ENCODE measurements at regions of chrX and their contacts with region 1.

Region 1: DNA sequence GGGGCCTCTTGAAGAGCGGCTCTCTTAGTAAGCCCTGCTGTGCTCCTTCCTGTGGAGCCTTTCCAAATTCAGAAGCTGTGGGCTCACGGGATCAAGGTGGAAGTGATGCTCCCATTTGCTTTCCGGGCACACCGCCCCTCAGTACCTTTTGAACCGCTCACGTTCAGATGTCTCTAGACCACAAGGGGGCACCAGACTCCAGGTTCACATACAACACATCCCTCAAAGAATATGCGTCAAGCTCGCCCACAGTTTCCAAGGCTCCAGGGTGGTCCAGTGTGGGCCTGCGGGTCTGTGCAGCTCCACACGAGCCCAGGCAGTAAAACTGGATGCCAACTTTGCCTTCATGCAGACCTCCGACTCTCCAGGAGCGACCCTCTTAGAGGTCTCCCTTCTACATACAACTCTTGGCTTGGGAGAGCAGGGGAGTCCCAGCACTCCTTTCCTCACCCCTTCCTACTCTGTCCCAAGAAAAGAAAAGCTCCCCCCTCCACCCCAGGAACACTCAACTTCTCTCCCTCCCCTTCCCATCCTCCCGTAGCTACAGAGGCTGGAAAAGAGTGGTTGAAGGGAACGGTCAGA is 11.0 kb downstream of the SUPT20HL1 start:
- DNase-seq: peak; percentile 75
- ATAC-seq: peak; percentile 64
- H3K4me3 Mint-ChIP-seq: peak overlapping the region; percentile 35
- H3K27ac Mint-ChIP-seq: peak overlapping the region; percentile 58
- H3K4me1 Mint-ChIP-seq: peaks cover 26% of the 10 kb centered on the region
- H3K27me3 Mint-ChIP-seq: no peaks in the 10 kb centered on the region

Region 2: GRCh38 chrX:23930894-23931689 is 440.4 kb before region 1 on chrX:
- CTCF ChIA-PET with region 1: no interaction called
- POLR2A ChIA-PET with region 1: no interaction called
- intact Hi-C with region 1: no loop called
- DNase-seq: no peak
- ATAC-seq: no peak
- H3K4me3 Mint-ChIP-seq: no peak overlapping the region
- H3K27ac Mint-ChIP-seq: peak overlapping the region; percentile 55
- H3K4me1 Mint-ChIP-seq: peaks cover 18% of the 10 kb centered on the region
- H3K27me3 Mint-ChIP-seq: no peaks in the 10 kb centered on the region

Region 3: GRCh38 chrX:24081661-24082264 is 289.7 kb before region 1 on chrX:
- CTCF ChIA-PET with region 1: no interaction called
- POLR2A ChIA-PET with region 1: no interaction called
- intact Hi-C with region 1: loop called in 1 of 2 experiments (anchors 2 kb)
- DNase-seq: peak; percentile 74
- ATAC-seq: peak; percentile 59
- H3K4me3 Mint-ChIP-seq: no peak overlapping the region
- H3K27ac Mint-ChIP-seq: no peak overlapping the region
- H3K4me1 Mint-ChIP-seq: peaks cover 27% of the 10 kb centered on the region
- H3K27me3 Mint-ChIP-seq: no peaks in the 10 kb centered on the region

Region 4: DNA sequence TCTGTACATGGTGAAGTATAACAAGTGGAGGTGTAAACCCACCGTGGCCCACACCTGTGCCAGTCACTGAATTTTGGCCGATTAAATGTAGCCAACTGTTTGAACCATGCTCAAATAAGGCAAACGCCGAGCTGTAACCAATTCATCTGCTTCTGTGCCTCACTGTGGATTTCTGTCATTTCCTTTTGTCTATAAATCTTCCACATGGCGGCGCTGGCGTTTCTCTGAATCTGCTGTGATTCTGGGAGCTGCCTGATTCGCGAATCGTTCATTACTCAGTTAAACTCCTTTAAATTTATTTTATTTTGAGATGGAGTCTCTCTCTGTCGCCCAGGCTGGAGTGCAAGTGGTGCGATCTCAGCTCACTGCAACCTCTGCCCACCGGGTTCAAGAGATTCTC is 76.9 kb before region 1 on chrX:
- CTCF ChIA-PET with region 1: interaction called, 6 read pairs
- POLR2A ChIA-PET with region 1: no interaction called
- intact Hi-C with region 1: loop called in 1 of 2 experiments (anchors 1 kb)
- DNase-seq: peak; percentile 73
- ATAC-seq: peak; percentile 47
- H3K4me3 Mint-ChIP-seq: no peak overlapping the region
- H3K27ac Mint-ChIP-seq: no peak overlapping the region
- H3K4me1 Mint-ChIP-seq: no peaks in the 10 kb centered on the region
- H3K27me3 Mint-ChIP-seq: no peaks in the 10 kb centered on the region

Region 5: GRCh38 chrX:24498975-24499374 is 127.5 kb after region 1 on chrX:
- CTCF ChIA-PET with region 1: interaction called, 30 read pairs
- POLR2A ChIA-PET with region 1: no interaction called
- intact Hi-C with region 1: no loop called
- DNase-seq: no peak
- ATAC-seq: peak; percentile 78
- H3K4me3 Mint-ChIP-seq: no peak overlapping the region
- H3K27ac Mint-ChIP-seq: peak overlapping the region; percentile 43
- H3K4me1 Mint-ChIP-seq: peaks cover 23% of the 10 kb centered on the region
- H3K27me3 Mint-ChIP-seq: no peaks in the 10 kb centered on the region

Region 6: GRCh38 chrX:24693453-24694202 is 322.1 kb after region 1 on chrX and contains the start of gene POLA1:
- CTCF ChIA-PET with region 1: no interaction called
- POLR2A ChIA-PET with region 1: interaction called, 6 read pairs
- intact Hi-C with region 1: loop called in 1 of 2 experiments (anchors 10 kb)
- DNase-seq: peak; percentile 89
- ATAC-seq: peak; percentile 93
- H3K4me3 Mint-ChIP-seq: peak within 1 kb of the TSS; percentile 85
- H3K27ac Mint-ChIP-seq: peak within 1 kb of the TSS; percentile 88
- H3K4me1 Mint-ChIP-seq: peaks cover 24% of the 10 kb centered on the region
- H3K27me3 Mint-ChIP-seq: no peaks in the 10 kb centered on the region
- total RNA-seq, gene POLA1: 48.4 to 52.1 TPM

Region 7: DNA sequence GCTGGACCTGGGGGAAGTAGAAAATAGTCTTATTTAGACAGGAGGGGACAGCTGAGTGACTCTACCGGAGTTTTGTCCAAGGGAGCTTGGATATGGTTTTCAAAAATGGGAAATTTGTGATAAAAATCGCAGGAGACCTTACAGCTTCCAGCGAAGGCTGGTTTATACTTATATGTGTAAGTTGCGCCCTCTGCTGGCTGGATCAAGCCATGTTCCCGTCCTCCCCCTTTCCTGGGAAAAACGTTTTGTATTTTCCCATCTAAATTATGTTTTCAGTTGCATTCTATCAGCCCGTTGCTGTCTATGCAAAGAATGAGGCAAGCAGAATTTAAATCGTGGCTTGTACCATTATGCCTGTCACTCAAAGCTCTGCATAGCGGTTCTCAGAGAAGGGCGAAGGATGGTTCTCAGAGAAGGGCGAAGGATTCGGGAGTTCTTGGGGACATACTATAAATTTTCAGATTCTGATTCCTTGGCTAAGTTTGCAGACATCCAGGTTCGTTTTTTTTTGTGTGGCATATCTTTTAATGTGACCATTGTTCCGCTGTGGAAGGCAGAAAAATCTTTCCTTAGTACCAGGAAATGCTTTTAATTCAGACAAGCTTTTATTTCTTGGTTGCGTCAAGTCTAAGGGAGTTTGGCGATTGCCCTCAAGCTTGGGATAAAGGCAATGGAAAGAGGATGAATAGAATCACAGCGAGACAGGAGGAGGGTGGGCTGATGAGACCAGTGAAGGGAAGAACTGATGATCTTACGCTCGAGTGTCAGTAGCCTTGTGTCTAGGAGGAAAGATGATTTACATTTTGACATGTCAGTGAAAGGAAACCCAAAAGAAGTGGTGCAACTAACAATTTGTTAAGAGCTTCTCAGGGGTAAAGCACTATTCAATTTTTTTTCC is 772.8 kb after region 1 on chrX:
- CTCF ChIA-PET with region 1: no interaction called
- POLR2A ChIA-PET with region 1: no interaction called
- intact Hi-C with region 1: loop called (anchors 5 kb)
- DNase-seq: peak; percentile 55
- ATAC-seq: no peak
- H3K4me3 Mint-ChIP-seq: no peak overlapping the region
- H3K27ac Mint-ChIP-seq: no peak overlapping the region
- H3K4me1 Mint-ChIP-seq: peaks cover 2% of the 10 kb centered on the region
- H3K27me3 Mint-ChIP-seq: peaks cover 3% of the 10 kb centered on the region

Measured in activated CD4-positive, alpha-beta T cell treated with anti-CD3 and anti-CD28 coated beads for 36 hours (primary cell).